ENCODE measurements at regions of chr11 and their contacts with region 1.

Region 1: DNA sequence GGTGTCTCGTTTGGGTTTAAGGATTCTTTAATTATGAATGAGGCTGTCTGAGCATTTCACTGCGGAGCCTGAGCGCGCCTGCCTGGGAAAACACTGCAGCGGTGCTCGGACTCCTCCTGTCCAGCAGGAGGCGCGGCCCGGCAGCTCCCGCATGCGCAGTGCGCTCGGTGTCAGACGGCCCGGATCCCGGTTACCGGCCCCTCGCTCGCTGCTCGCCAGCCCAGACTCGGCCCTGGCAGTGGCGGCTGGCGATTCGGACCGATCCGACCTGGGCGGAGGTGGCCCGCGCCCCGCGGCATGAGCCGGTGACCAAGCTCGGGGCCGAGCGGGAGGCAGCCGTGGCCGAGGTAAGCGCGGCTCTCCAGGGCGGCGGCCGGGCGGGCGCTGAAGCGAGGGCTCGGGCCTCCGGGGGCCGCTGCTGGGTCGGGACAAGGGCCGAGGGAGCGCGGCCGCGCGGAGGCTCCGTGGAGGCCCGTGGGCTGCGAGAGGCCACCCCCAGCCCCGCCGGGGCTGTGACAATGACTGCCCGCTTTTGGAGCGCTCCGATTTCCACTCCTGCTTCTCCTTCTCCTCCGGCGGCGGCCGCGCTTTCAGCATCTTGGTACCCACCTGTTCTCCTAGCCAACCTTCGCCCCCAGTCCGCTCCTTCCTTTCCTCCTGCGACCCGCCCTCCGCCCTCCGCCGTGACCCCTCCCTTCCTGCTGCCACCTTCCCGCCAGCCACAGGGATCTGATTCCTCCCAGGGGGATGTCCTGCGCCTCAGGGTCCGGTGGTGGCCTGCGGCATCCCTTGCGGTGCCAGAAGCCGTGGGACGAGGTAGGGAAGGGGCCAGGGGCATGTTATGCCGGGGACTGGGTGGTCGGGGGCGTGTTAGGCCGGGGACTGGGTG is at the start of gene EXT2:
- DNase-seq: peak; percentile 51 to 91 (median 79)
- ATAC-seq: peak; percentile 95 to 97 (median 95)
- H3K4me3 ChIP-seq: peak within 1 kb of the TSS; percentile 65 to 74
- H3K4me3 Mint-ChIP-seq: peak within 1 kb of the TSS; percentile 81 to 83 (median 81)
- H3K27ac ChIP-seq: no peak within 1 kb of the TSS
- H3K27ac Mint-ChIP-seq: peak within 1 kb of the TSS; percentile 36 to 40
- H3K4me1 ChIP-seq: peaks cover 7 to 16% of the 10 kb centered on the region in 2 experiments
- H3K4me1 Mint-ChIP-seq: peaks cover 34 to 43% (median 35%) of the 10 kb centered on the region in 3 donors
- H3K27me3 ChIP-seq: no peaks in the 10 kb centered on the region
- H3K27me3 Mint-ChIP-seq: no peaks in the 10 kb centered on the region
- total RNA-seq, gene EXT2: 24.8 to 30.5 (median 26.6) TPM

Region 2: GRCh38 chr11:44065841-44066731 is 29.7 kb before region 1 on chr11 and contains the start of gene ACCS:
- CTCF ChIA-PET with region 1: interaction called, 4 to 30 read pairs
- POLR2A ChIA-PET with region 1: no interaction called
- DNase-seq: peak; percentile 80 to 94 (median 89)
- ATAC-seq: peak; percentile 93 to 99 (median 96)
- H3K4me3 ChIP-seq: peak within 1 kb of the TSS; percentile 83 to 88
- H3K4me3 Mint-ChIP-seq: peak within 1 kb of the TSS; percentile 79 to 96 (median 91)
- H3K27ac ChIP-seq: peak within 1 kb of the TSS; percentile 86
- H3K27ac Mint-ChIP-seq: peak within 1 kb of the TSS; percentile 85 to 89
- H3K4me1 ChIP-seq: peaks cover 4 to 22% of the 10 kb centered on the region in 2 experiments
- H3K4me1 Mint-ChIP-seq: peaks cover 23 to 42% (median 30%) of the 10 kb centered on the region in 3 donors
- H3K27me3 ChIP-seq: no peaks in the 10 kb centered on the region
- H3K27me3 Mint-ChIP-seq: no peaks in the 10 kb centered on the region
- total RNA-seq, gene ACCS: 18.9 to 66.4 (median 27.5) TPM

Region 3: DNA sequence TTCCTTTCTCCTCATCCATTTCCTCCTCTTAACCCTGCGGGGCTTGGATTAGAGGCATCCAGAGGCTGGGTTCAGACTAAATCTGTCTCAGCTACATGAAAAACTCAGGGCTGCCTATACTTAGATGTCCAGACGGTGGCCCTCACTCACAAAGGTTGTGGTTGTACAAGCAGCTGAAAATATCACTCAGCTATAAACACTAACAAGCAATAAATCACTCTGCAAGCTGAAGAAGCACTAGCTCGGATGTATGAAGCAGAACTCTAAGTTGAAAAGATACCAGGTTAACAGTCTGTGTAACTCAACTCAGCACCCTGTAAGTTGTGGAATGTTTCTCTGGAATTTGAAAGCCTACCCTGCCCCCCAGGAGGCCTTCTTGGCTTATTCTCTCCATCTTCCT is 82.6 kb after region 1 on chr11:
- CTCF ChIA-PET with region 1: no interaction called
- POLR2A ChIA-PET with region 1: no interaction called
- DNase-seq: no peak
- ATAC-seq: no peak
- H3K4me3 ChIP-seq: no peak overlapping the region
- H3K4me3 Mint-ChIP-seq: no peak overlapping the region
- H3K27ac ChIP-seq: no peak overlapping the region
- H3K27ac Mint-ChIP-seq: peak overlapping the region in 1 of 2 donors; percentile 62
- H3K4me1 ChIP-seq: no peaks in the 10 kb centered on the region
- H3K4me1 Mint-ChIP-seq: peaks cover 2 to 19% (median 3%) of the 10 kb centered on the region in 3 donors
- H3K27me3 ChIP-seq: no peaks in the 10 kb centered on the region
- H3K27me3 Mint-ChIP-seq: no peaks in the 10 kb centered on the region